ENCODE measurements at regions of chr6 and their contacts with region 1.

Region 1: DNA sequence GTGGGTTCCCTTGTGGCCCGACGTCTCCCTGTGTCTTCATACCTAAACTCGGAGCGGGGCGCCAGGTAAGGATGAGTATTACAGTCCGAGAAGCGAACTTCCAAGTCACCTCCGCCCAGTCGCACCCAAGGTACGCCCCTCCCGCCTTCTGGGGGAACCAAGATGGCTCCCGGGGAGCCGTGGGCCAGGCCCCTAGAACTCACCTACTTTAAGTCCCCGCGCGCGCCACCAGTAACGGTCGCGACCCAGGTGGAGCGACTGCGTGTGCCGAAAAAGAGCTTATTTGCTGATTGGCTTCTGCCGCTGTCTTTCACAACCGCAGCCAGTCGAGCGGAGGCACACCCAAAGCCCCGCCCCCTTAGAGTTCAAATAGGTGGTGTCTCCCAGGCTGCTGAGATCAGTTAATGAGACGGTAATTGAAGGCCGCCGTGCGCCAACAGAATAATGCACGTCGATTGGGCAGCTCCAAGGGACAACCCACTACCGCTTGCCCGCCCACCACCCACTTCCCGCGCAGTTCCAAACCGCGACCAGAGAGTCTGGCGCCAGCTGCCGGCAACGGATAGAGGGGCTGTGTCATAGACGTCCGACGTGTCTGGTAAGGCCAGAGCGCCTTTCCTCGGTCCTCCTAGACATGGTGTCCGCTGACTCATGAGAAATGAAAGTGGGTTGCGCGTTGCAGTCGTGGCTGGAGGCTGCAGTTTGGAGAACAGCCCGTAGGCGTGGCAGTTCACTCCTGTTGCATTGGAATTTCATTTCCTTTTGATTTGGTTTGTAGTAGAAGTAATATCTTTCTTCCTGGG is at the start of gene MDC1:
- DNase-seq: peak; percentile 96 to 100 (median 98)
- ATAC-seq: peak; percentile 73
- H3K4me3 ChIP-seq: peak within 1 kb of the TSS; percentile 81
- H3K4me3 Mint-ChIP-seq: peak within 1 kb of the TSS; percentile 95
- H3K27ac ChIP-seq: peak within 1 kb of the TSS; percentile 86 to 90
- H3K27ac Mint-ChIP-seq: peak within 1 kb of the TSS; percentile 96
- H3K4me1 ChIP-seq: peaks cover 42% of the 10 kb centered on the region
- H3K4me1 Mint-ChIP-seq: peaks cover 45% of the 10 kb centered on the region
- H3K27me3 ChIP-seq: no peaks in the 10 kb centered on the region
- H3K27me3 Mint-ChIP-seq: no peaks in the 10 kb centered on the region
- CTCF ChIP-seq: peak; percentile 45
- total RNA-seq, gene MDC1: 50.5 to 56.8 TPM

Region 2: DNA sequence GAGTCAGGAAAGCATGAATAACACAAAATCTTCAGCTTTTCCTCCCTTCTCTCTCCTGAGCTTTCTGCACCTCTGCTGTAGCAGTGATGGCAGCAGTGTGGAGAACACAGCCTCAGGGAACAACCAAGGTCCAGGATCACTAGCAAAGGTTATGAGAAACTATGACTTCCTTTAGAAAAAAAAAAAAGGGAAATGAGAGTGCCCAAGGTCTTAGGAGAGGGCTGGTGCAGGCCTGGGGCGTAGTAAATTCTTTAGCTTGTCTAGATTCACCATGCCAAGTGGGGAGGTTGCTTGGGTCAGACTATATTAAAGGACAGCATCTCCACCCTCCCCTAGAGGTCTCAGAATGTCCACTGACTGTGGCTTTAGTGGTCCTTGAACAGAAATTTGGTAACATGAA is 696.6 kb before region 1 on chr6:
- CTCF ChIA-PET with region 1: no interaction called
- POLR2A ChIA-PET with region 1: no interaction called
- intact Hi-C with region 1: no loop called
- DNase-seq: no peak
- ATAC-seq: no peak
- H3K4me3 ChIP-seq: no peak overlapping the region
- H3K4me3 Mint-ChIP-seq: no peak overlapping the region
- H3K27ac ChIP-seq: no peak overlapping the region
- H3K27ac Mint-ChIP-seq: no peak overlapping the region
- H3K4me1 ChIP-seq: no peaks in the 10 kb centered on the region
- H3K4me1 Mint-ChIP-seq: no peaks in the 10 kb centered on the region
- H3K27me3 ChIP-seq: no peaks in the 10 kb centered on the region
- H3K27me3 Mint-ChIP-seq: no peaks in the 10 kb centered on the region
- CTCF ChIP-seq: no peak

Region 3: GRCh38 chr6:30489081-30490025 is 227.9 kb before region 1 on chr6 and contains the start of gene HLA-E:
- CTCF ChIA-PET with region 1: no interaction called
- POLR2A ChIA-PET with region 1: interaction called, 6 read pairs
- intact Hi-C with region 1: loop called in 1 of 2 experiments (anchors 1 kb)
- DNase-seq: peak; percentile 74 to 99 (median 88)
- ATAC-seq: peak; percentile 80
- H3K4me3 ChIP-seq: peak within 1 kb of the TSS; percentile 83
- H3K4me3 Mint-ChIP-seq: peak within 1 kb of the TSS; percentile 100
- H3K27ac ChIP-seq: peak within 1 kb of the TSS; percentile 95 to 96
- H3K27ac Mint-ChIP-seq: peak within 1 kb of the TSS; percentile 98
- H3K4me1 ChIP-seq: peaks cover 59% of the 10 kb centered on the region
- H3K4me1 Mint-ChIP-seq: peaks cover 62% of the 10 kb centered on the region
- H3K27me3 ChIP-seq: no peaks in the 10 kb centered on the region
- H3K27me3 Mint-ChIP-seq: no peaks in the 10 kb centered on the region
- CTCF ChIP-seq: no peak
- total RNA-seq, gene HLA-E: 1,136 to 1,173 TPM

Region 4: DNA sequence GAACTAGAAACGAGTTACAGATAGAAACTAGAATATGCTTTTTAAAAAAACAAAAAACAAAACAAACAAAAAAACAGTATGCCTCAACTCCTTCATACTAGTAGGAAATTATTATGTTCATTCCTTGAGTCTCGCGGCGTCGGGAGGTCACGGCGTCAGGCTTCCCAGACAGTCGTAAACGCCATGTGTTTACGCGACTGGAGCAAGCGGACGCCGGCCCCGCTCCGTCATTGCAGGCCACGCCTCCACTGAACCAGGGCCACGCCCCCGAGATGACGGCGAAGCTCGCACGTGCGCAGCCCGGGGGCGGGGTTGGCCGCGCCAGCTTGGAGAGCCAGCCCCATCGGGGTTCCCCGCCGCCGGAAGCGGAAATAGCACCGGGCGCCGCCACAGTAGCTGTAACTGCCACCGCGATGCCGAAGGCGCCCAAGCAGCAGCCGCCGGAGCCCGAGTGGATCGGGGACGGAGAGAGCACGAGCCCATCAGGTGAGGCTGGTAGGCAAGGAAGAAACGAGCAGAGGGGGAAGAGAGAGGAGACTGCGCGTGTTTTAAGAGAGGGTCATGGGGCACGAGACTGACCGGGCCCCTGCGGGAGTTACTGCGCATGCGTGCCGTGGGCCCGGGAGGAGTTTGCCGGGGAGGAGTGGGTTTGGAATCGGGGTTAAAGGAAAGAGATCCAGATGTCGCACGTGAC is 146.0 kb before region 1 on chr6 and contains the start of gene ABCF1:
- CTCF ChIA-PET with region 1: interaction called, 9 read pairs
- POLR2A ChIA-PET with region 1: interaction called, 8 read pairs
- intact Hi-C with region 1: loop called in 1 of 2 experiments (anchors 5 kb)
- DNase-seq: peak; percentile 97 to 100 (median 99)
- ATAC-seq: peak; percentile 90
- H3K4me3 ChIP-seq: peak within 1 kb of the TSS; percentile 82
- H3K4me3 Mint-ChIP-seq: peak within 1 kb of the TSS; percentile 100
- H3K27ac ChIP-seq: peak within 1 kb of the TSS; percentile 94 to 98
- H3K27ac Mint-ChIP-seq: peak within 1 kb of the TSS; percentile 98
- H3K4me1 ChIP-seq: peaks cover 47% of the 10 kb centered on the region
- H3K4me1 Mint-ChIP-seq: peaks cover 56% of the 10 kb centered on the region
- H3K27me3 ChIP-seq: no peaks in the 10 kb centered on the region
- H3K27me3 Mint-ChIP-seq: no peaks in the 10 kb centered on the region
- CTCF ChIP-seq: no peak
- total RNA-seq, gene ABCF1: 86.1 to 88.0 TPM

Region 5: DNA sequence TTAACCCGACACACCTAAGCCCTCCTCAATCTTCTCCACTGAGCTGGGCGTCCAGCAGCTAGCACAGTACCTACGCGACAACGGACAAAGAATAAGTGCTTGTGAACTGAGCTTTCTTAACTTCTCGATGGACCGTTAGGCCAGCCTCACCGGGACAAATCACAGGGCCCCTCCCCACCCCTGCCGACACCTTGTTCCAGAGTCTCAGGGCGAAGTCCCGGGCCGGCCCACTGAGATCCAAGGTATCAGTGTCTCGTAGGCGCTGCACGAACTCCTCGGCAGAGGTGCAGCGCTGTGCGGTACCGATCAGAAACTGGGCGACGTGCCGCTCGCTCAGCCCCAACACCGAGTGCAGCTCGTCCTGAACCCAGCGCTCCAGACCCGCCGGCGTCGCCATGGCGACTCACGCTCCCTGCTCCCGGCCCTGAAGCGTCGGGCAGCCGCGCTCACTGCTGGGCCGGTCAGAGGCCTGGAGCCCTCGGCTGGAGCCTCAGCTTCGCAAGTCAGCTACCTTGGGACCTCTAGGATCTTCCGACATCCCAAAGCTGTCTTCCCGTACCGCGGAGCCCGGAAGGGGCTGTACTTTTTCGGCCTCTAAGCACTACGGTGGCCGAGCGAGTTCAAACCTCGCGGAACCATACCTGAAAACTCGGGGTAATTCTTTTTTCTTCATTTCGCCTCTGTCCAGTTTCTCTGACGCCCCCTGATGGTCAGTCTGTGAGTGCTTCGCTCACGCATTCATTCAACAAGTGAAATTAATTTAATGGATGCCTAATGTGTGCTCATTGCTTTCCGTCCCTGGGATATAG is 44.6 kb before region 1 on chr6 and contains the start of gene DHX16:
- CTCF ChIA-PET with region 1: interaction called, 526 read pairs
- POLR2A ChIA-PET with region 1: interaction called, 17 read pairs
- intact Hi-C with region 1: no loop called
- DNase-seq: peak; percentile 79 to 95 (median 84)
- ATAC-seq: peak; percentile 76
- H3K4me3 ChIP-seq: peak within 1 kb of the TSS; percentile 98
- H3K4me3 Mint-ChIP-seq: peak within 1 kb of the TSS; percentile 87
- H3K27ac ChIP-seq: peak within 1 kb of the TSS; percentile 49 to 59
- H3K27ac Mint-ChIP-seq: peak within 1 kb of the TSS; percentile 86
- H3K4me1 ChIP-seq: peaks cover 18% of the 10 kb centered on the region
- H3K4me1 Mint-ChIP-seq: peaks cover 49% of the 10 kb centered on the region
- H3K27me3 ChIP-seq: no peaks in the 10 kb centered on the region
- H3K27me3 Mint-ChIP-seq: no peaks in the 10 kb centered on the region
- CTCF ChIP-seq: peak; percentile 69
- total RNA-seq, gene DHX16: 15.9 to 16.1 TPM

Region 6: GRCh38 chr6:30686908-30687658 is 30.2 kb before region 1 on chr6:
- CTCF ChIA-PET with region 1: interaction called, 526 read pairs
- POLR2A ChIA-PET with region 1: interaction called, 381 read pairs
- intact Hi-C with region 1: loop called (anchors 1 kb)
- DNase-seq: peak; percentile 44 to 84 (median 64)
- ATAC-seq: peak; percentile 19
- H3K4me3 ChIP-seq: peak overlapping the region; percentile 99
- H3K4me3 Mint-ChIP-seq: peak overlapping the region; percentile 98
- H3K27ac ChIP-seq: peak overlapping the region; percentile 96 to 98
- H3K27ac Mint-ChIP-seq: peak overlapping the region; percentile 94
- H3K4me1 ChIP-seq: peaks cover 50% of the 10 kb centered on the region
- H3K4me1 Mint-ChIP-seq: peaks cover 57% of the 10 kb centered on the region
- H3K27me3 ChIP-seq: no peaks in the 10 kb centered on the region
- H3K27me3 Mint-ChIP-seq: no peaks in the 10 kb centered on the region
- CTCF ChIP-seq: no peak